Activated CD4-positive, alpha-beta memory T cell treated with anti-CD3 and anti-CD28 coated beads, Interleukin-2, amount 10 ng/mL, durations not matched to agents 7 days and 5 days (primary cell): ENCODE measurements at regions of chr11 and their contacts with region 1.

Region 1: GRCh38 chr11:122655527-122656072 is at the start of gene UBASH3B:
- DNase-seq: peak; percentile 68
- H3K4me3 Mint-ChIP-seq: peak within 1 kb of the TSS; percentile 90
- H3K27ac Mint-ChIP-seq: peak within 1 kb of the TSS; percentile 70
- H3K4me1 Mint-ChIP-seq: peaks cover 21% of the 10 kb centered on the region
- H3K27me3 Mint-ChIP-seq: peaks cover 32% of the 10 kb centered on the region
- total RNA-seq, gene UBASH3B: 18.4 to 20.9 TPM

Region 2: GRCh38 chr11:122538060-122538459 is 117.5 kb before region 1 on chr11:
- CTCF ChIA-PET with region 1: no interaction called
- POLR2A ChIA-PET with region 1: no interaction called
- DNase-seq: no peak
- H3K4me3 Mint-ChIP-seq: no peak overlapping the region
- H3K27ac Mint-ChIP-seq: no peak overlapping the region
- H3K4me1 Mint-ChIP-seq: no peaks in the 10 kb centered on the region
- H3K27me3 Mint-ChIP-seq: no peaks in the 10 kb centered on the region

Region 3: DNA sequence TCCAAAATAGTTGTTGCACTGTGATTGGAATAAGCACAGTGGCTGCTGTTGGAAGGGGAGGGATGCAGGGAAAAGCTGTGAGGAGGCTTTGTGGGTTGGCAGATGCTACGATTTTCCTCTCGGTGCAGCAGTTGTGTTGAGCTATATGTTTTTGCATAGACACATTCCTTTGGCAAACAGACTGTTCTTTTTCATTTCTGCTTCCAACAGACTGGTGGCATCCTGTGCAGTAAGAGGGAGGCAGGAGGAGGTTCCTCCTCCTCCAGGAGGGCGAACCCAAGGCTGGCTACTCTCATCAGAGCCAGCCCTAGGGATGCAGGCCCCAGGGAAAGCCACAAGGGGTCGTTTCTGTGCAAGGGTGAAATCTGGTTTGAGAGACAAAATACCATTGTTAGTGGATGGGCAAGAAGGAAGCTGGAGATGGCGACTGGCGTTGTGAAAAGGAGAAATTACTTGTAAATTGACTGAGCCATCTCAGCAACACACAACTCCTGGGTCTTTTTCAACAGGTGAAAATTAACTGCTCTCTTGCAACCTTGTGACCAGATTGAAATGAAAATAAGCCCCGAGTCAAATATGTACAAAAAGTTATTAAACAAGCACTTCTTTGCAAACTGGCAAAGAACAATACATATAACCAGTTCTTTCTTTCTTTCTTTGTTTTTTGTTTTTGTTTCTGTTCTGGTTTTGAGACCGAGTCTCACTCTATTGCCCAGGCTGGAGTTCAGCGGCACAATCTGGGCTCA is 26.6 kb before region 1 on chr11:
- CTCF ChIA-PET with region 1: interaction called, 22 read pairs
- POLR2A ChIA-PET with region 1: interaction called, 5 read pairs
- DNase-seq: peak; percentile 67
- H3K4me3 Mint-ChIP-seq: no peak overlapping the region
- H3K27ac Mint-ChIP-seq: no peak overlapping the region
- H3K4me1 Mint-ChIP-seq: peaks cover 5% of the 10 kb centered on the region
- H3K27me3 Mint-ChIP-seq: peaks cover 9% of the 10 kb centered on the region

Region 4: DNA sequence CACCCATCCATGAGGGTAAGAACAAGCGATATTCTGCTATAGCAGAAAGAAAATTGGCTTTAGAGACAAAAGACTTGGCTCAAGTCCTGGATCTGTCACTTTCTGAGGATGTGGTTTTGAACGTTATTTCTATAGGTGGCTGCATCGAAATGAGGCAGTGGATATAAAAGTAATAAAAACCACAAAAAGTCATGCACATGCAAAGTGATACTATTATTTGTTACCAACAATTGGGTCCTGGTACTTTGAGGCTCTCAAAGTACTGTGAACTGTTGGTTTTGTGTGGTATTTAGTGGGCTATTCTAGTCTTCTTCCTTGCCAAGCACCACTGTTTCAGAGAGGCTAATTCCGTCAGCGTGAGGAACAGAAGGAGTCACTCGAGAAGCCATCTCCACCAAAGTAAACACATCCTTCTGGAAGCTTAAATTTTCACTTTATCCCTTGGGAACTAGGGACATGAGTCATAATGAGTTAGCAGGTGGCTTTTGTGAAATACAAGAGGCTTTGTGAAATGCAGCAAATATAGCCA is 13.0 kb after region 1 on chr11:
- CTCF ChIA-PET with region 1: interaction called, 20 read pairs
- POLR2A ChIA-PET with region 1: interaction called, 9 read pairs
- DNase-seq: no peak
- H3K4me3 Mint-ChIP-seq: no peak overlapping the region
- H3K27ac Mint-ChIP-seq: no peak overlapping the region
- H3K4me1 Mint-ChIP-seq: peaks cover 37% of the 10 kb centered on the region
- H3K27me3 Mint-ChIP-seq: peaks cover 2% of the 10 kb centered on the region

Region 5: DNA sequence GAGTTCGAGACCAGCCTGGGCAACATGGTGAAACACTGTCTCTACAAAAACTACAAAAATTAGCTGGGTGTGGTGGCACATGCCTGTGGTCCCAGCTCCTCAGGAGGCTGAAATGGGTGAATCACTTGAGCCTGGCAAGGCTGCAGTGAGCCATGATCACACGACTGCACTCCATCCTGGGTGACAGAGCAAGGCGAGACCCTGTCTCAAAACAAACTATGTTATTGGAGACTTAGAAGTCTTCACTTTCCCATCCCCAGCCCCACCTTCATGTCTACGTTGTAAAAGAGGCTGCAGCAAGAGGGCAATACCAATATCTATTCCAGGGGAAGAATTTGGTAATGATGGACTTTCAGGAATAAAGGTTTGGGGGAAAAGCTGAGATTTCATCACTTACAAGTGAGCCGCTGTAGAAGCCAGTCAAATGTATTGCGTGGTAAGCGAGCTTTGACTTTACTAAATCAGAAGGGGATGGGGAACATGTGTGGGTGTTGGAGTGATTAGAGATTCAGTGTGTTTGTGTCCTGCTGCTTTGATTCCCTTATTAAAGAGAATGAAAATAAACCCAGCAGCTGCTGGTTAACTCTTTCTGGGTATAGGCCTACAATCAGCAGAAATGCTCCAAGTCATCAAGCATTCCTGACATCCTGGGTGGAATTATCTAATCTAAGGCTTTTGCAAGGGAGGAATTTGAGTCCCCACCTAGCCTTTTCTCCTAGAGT is 53.6 kb after region 1 on chr11:
- CTCF ChIA-PET with region 1: no interaction called
- POLR2A ChIA-PET with region 1: no interaction called
- DNase-seq: no peak
- H3K4me3 Mint-ChIP-seq: no peak overlapping the region
- H3K27ac Mint-ChIP-seq: no peak overlapping the region
- H3K4me1 Mint-ChIP-seq: peaks cover 11% of the 10 kb centered on the region
- H3K27me3 Mint-ChIP-seq: no peaks in the 10 kb centered on the region

Region 6: DNA sequence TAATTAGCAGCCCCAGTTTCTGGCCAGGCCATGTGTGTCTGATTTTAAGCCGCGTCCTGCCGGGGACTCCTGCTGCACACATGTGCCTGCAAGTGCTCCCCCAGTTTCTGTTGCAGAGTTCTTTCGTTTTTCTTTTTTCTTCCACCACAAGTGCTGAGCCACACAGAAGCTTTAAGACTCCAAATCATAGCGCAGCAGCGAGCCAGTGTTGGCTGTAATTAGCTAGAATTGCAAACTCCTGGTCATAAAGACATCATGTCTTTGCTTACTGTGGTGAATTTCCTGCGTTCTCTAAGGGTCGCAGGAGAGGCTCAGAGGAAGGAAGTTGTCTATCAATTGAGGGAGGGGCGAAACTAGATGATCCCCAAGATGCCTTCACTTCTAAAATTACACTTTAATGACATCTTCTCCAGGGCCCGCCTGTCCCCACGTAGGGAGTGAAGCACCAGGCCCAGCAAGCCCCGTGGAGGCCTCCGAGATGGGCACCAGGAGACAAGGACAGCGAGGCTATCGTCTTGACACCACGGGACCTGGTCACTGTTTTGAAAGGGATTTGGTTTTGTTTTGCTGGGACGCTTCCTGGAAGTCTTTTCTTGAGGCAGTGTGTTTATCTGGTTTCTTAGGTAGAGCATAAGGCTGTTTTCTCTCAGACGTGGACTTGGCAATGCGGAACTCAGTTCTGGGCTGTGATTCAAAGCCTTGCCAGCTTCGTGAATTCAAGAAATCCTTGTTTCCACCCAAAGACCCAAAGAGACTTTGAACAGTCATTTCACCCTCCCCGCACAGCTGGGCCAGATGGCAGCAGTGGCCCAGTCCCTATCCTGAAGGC is 71.7 kb after region 1 on chr11:
- CTCF ChIA-PET with region 1: interaction called, 11 read pairs
- POLR2A ChIA-PET with region 1: interaction called, 12 read pairs
- DNase-seq: peak; percentile 59
- H3K4me3 Mint-ChIP-seq: peak overlapping the region; percentile 60
- H3K27ac Mint-ChIP-seq: peak overlapping the region; percentile 90
- H3K4me1 Mint-ChIP-seq: peaks cover 68% of the 10 kb centered on the region
- H3K27me3 Mint-ChIP-seq: no peaks in the 10 kb centered on the region

Region 7: GRCh38 chr11:122749005-122749687 is 93.5 kb after region 1 on chr11:
- CTCF ChIA-PET with region 1: interaction called, 179 read pairs
- POLR2A ChIA-PET with region 1: interaction called, 28 read pairs
- DNase-seq: peak; percentile 79
- H3K4me3 Mint-ChIP-seq: peak overlapping the region; percentile 11
- H3K27ac Mint-ChIP-seq: peak overlapping the region; percentile 68
- H3K4me1 Mint-ChIP-seq: peaks cover 21% of the 10 kb centered on the region
- H3K27me3 Mint-ChIP-seq: no peaks in the 10 kb centered on the region